ENCODE measurements at regions of chr16 and their contacts with region 1.

Region 1: GRCh38 chr16:30874821-30875717 is 18.8 kb downstream of the BCL7C start:
- DNase-seq: peak; percentile 95 to 97
- ATAC-seq: peak; percentile 99
- H3K4me3 ChIP-seq: peak overlapping the region; percentile 12 to 85
- H3K27ac ChIP-seq: peak overlapping the region in 1 of 2 donors; percentile 83
- H3K4me1 ChIP-seq: no peaks in the 10 kb centered on the region
- H3K27me3 ChIP-seq: no peaks in the 10 kb centered on the region

Region 2: GRCh38 chr16:30805370-30806169 is 69.5 kb before region 1 on chr16:
- intact Hi-C with region 1: loop called (anchors 5 to 10 kb)
- DNase-seq: peak; percentile 94 to 95
- ATAC-seq: peak; percentile 99
- H3K4me3 ChIP-seq: peak overlapping the region; percentile 48 to 73
- H3K27ac ChIP-seq: peak overlapping the region; percentile 41 to 51
- H3K4me1 ChIP-seq: no peaks in the 10 kb centered on the region
- H3K27me3 ChIP-seq: no peaks in the 10 kb centered on the region

Region 3: GRCh38 chr16:30893744-30894539 is 18.9 kb after region 1 on chr16 and contains the start of gene BCL7C:
- intact Hi-C with region 1: loop called in 1 of 2 experiments (anchors 2 kb)
- DNase-seq: peak; percentile 95 to 98
- ATAC-seq: peak; percentile 91
- H3K4me3 ChIP-seq: peak within 1 kb of the TSS; percentile 56 to 80
- H3K27ac ChIP-seq: peak within 1 kb of the TSS; percentile 10 to 48
- H3K4me1 ChIP-seq: no peaks in the 10 kb centered on the region
- H3K27me3 ChIP-seq: no peaks in the 10 kb centered on the region
- total RNA-seq, gene BCL7C: 30.2 to 33.9 TPM

Region 4: DNA sequence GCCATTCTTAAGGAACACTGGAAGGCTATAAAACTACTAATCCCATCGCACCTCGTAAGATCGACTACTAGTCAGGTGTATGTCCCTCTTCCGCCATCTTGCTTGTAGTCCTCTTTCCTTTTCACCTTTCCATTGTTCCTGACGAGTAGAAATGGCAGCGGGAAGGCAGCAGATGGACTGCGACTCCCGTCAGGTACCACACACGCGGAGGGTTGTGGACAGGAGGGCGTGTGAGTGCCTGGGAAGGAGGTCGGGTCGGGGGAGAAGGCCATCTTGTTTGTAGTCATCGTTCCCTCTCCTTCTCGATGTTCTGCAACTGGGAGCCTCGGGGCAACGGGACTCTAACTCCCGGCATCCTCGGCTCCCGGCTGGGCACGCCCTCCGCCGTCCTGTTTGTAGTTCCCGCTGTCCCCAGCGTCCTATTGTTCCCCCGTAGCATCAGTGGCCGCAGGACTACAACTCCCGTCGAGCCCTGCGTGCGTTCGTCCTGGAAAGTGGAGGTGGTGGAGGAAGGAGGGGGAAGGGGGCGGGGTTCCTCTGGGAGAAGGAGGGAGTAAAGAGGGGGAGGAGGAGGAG is 48.0 kb after region 1 on chr16:
- intact Hi-C with region 1: loop called in 1 of 2 experiments (anchors 1 kb)
- DNase-seq: peak; percentile 100
- ATAC-seq: peak; percentile 93
- H3K4me3 ChIP-seq: peak overlapping the region; percentile 49 to 90
- H3K27ac ChIP-seq: peak overlapping the region in 1 of 2 donors; percentile 93
- H3K4me1 ChIP-seq: peaks cover 0 to 1% of the 10 kb centered on the region in 2 donors
- H3K27me3 ChIP-seq: no peaks in the 10 kb centered on the region

Region 5: GRCh38 chr16:31196324-31197088 is 321.4 kb after region 1 on chr16:
- intact Hi-C with region 1: no loop called
- DNase-seq: peak; percentile 21 to 67
- ATAC-seq: no peak
- H3K4me3 ChIP-seq: no peak overlapping the region
- H3K27ac ChIP-seq: no peak overlapping the region
- H3K4me1 ChIP-seq: no peaks in the 10 kb centered on the region
- H3K27me3 ChIP-seq: no peaks in the 10 kb centered on the region